ENCODE measurements at regions of chr1 and their contacts with region 1.

Region 1: GRCh38 chr1:150674881-150675280 is 22.1 kb downstream of the GOLPH3L start:
- DNase-seq: no peak
- ATAC-seq: no peak
- H3K4me3 ChIP-seq: no peak overlapping the region
- H3K27ac ChIP-seq: no peak overlapping the region
- H3K4me1 ChIP-seq: no peaks in the 10 kb centered on the region
- H3K27me3 ChIP-seq: no peaks in the 10 kb centered on the region
- CTCF ChIP-seq: no peak

Region 2: GRCh38 chr1:149986486-149987294 is 688.2 kb before region 1 on chr1:
- CTCF ChIA-PET with region 1: no interaction called
- POLR2A ChIA-PET with region 1: no interaction called
- intact Hi-C with region 1: no loop called
- DNase-seq: peak; percentile 31
- ATAC-seq: peak; percentile 33; the same call in 1 of the 2 replicates
- H3K4me3 ChIP-seq: no peak overlapping the region
- H3K27ac ChIP-seq: no peak overlapping the region
- H3K4me1 ChIP-seq: peaks cover 11% of the 10 kb centered on the region
- H3K27me3 ChIP-seq: no peaks in the 10 kb centered on the region
- CTCF ChIP-seq: no peak

Region 3: GRCh38 chr1:150207281-150207971 is 467.5 kb before region 1 on chr1:
- CTCF ChIA-PET with region 1: no interaction called
- POLR2A ChIA-PET with region 1: no interaction called
- intact Hi-C with region 1: no loop called
- DNase-seq: no peak
- ATAC-seq: no peak
- H3K4me3 ChIP-seq: no peak overlapping the region
- H3K27ac ChIP-seq: no peak overlapping the region
- H3K4me1 ChIP-seq: no peaks in the 10 kb centered on the region
- H3K27me3 ChIP-seq: no peaks in the 10 kb centered on the region
- CTCF ChIP-seq: no peak

Region 4: DNA sequence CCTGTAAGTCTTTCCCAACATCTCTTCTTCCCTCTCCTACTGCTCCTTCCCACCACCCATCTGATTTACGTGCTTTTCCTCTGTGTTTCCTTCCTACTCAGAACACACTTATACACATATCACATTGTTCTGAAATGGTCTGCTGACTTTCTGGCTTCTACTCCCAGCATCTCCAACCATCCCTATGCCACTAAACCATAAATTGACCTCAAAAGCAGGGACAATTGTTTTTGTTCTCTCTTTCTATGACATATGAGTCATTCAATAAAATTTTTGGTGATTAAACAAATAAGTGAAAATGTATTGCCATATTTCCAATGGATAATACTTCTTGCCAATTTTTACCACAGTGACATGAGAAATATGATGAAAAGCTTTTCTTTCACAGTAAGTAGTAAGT is 13.9 kb after region 1 on chr1:
- CTCF ChIA-PET with region 1: interaction called, 4 read pairs
- POLR2A ChIA-PET with region 1: no interaction called
- intact Hi-C with region 1: loop called (anchors 1 kb)
- DNase-seq: peak; percentile 71
- ATAC-seq: peak; percentile 66
- H3K4me3 ChIP-seq: no peak overlapping the region
- H3K27ac ChIP-seq: peak overlapping the region; percentile 35
- H3K4me1 ChIP-seq: peaks cover 27% of the 10 kb centered on the region
- H3K27me3 ChIP-seq: no peaks in the 10 kb centered on the region
- CTCF ChIP-seq: no peak